Left ventricle myocardium inferior (tissue), 1 donor: ENCODE measurements at regions of chr13 and their contacts with region 1.

Region 1: GRCh38 chr13:27079421-27079958 is 92.1 kb downstream of the USP12 start:
- DNase-seq: no peak
- H3K4me3 ChIP-seq: no peak overlapping the region
- H3K27ac ChIP-seq: no peak overlapping the region
- H3K4me1 ChIP-seq: peaks cover 25% of the 10 kb centered on the region
- H3K27me3 ChIP-seq: no peaks in the 10 kb centered on the region
- CTCF ChIP-seq: no peak

Region 2: DNA sequence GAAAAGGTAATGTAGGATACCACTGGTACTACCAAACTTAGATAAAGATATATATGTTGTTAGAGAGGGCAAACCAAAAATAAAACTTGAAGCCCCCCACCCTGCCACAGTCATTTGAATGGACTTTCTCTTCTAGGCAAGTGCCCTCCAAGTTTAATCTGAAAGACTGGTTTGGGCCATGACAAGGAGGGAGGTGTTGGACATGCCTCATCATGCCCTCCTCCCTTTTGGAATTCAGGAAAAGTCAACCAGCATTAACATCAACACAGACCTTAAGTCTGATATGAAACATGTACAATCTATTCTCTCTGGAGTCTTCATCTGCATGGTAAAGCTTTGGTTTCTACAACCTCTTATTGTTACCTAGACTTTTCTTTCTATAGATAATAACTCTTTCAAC is 272.6 kb before region 1 on chr13:
- intact Hi-C with region 1: no loop called
- DNase-seq: no peak
- H3K4me3 ChIP-seq: no peak overlapping the region
- H3K27ac ChIP-seq: no peak overlapping the region
- H3K4me1 ChIP-seq: no peaks in the 10 kb centered on the region
- H3K27me3 ChIP-seq: peaks cover 23% of the 10 kb centered on the region
- CTCF ChIP-seq: no peak

Region 3: GRCh38 chr13:26837997-26838396 is 241.5 kb before region 1 on chr13:
- intact Hi-C with region 1: no loop called
- DNase-seq: peak; percentile 18
- H3K4me3 ChIP-seq: no peak overlapping the region
- H3K27ac ChIP-seq: no peak overlapping the region
- H3K4me1 ChIP-seq: peaks cover 17% of the 10 kb centered on the region
- H3K27me3 ChIP-seq: peaks cover 15% of the 10 kb centered on the region
- CTCF ChIP-seq: no peak

Region 4: DNA sequence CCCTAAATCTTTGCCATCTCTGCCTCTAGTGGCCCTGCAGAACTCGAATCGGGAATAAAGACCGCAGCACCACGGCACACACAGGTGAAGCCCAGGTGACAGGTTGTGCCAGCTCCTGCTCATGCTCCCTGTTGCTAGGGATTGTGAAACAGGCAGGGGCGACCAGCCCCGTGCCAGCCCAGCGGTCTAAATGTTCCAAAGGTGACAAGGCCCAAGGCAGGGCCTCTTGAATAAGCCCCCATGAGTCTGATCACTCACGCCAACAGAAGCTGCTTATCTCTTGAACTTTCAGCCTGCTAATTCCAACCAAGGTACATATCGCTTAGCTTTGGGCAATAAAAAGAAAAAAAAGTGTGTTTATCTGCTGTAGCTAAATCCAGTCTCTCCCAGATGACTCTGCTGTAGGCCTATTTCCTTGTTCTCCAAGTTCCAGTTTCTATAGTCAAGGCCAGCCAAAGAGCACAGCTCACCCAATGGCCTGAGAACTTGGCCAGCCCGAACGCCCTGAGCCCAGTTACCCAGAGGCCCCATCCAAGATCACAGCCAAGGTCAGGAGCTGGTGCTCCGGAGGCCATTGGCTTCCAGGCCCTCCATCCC is 127.8 kb before region 1 on chr13:
- intact Hi-C with region 1: no loop called
- DNase-seq: no peak
- H3K4me3 ChIP-seq: no peak overlapping the region
- H3K27ac ChIP-seq: no peak overlapping the region
- H3K4me1 ChIP-seq: no peaks in the 10 kb centered on the region
- H3K27me3 ChIP-seq: no peaks in the 10 kb centered on the region
- CTCF ChIP-seq: no peak

Region 5: DNA sequence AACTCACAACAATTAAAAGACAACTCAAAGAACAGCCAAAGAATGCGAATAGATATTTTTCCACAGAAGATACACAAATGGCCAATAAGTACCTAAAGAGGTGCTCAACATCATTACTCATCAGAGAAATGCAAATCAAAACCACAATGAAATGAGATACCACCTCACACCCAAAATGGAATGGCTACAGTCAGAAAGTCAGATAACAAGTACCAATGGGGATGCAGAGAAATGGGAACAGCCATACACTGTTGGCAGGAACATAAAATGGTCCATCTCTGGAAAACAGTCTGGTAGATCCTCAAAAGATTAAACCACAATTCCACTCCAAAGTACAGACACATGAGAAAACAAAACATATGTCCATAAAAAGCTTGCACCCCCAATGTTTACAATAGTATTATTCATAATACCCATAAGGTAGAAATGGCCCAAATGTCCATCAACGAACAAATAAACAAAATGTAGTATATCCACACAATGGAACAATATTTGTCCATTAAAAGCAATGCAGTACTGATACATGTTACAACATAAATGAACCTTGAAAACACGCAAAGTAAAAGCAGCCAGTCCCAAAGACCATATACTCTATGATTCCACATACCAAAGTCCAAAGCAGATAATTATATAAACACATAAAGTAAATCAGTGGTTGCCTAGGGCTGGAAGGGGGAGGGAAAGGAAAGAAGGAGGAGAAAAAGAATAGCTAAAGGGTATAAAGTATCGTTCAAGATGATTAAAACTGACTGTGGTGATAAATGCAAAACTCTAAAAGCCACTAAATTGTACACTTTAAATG is 72.5 kb after region 1 on chr13:
- intact Hi-C with region 1: loop called (anchors 2 kb)
- DNase-seq: no peak
- H3K4me3 ChIP-seq: no peak overlapping the region
- H3K27ac ChIP-seq: no peak overlapping the region
- H3K4me1 ChIP-seq: peaks cover 15% of the 10 kb centered on the region
- H3K27me3 ChIP-seq: no peaks in the 10 kb centered on the region
- CTCF ChIP-seq: no peak